GM18951 (cell line): ENCODE measurements at regions of chr3 and their contacts with region 1.

Region 1: DNA sequence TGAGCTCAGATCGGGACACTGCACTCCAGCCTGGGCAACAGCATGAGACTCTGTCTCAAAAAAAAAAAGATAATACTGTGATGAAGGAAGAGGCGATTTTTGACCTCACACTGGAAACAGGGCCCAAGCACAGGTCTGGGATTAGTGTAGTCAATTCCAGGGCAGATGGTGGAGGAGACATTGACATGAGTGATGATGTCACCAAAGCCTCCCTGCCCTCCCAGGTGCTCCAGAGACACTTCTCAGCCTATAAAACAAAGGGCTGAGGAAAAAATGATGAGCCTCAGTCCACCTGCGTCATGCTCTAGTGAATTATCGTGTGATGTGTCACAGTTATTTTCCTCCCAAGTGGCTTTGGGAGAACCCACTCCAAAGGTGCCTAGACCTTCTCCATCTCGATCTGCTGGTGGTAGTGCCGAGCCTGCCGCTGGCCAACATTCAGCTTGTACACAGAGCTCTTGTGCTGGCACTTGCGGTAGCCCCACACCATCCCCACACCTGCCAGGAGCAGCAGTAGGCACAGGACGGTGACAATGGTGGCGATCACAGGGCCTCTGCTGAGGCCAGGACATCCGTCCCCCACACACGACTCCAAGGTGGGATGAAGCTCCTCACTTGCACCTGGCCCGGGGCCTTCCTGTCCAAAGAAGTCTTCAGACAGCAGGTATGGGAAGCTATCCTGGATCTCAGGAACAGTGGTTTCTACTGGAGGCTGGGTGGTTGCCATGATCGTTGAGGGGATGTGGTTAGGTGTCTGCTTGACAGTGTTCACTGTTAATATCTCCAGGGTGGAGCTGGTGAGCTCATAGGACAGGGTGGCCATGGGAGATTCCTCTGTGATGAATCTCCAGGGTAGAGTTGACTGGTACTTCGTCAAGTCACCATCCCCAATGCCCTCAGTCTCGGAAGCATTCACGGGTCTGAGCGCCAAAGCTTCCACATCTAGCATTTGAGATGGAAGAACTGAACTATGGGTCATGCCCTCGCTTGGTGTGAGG is 38.8 kb downstream of the CRTAP start:
- POLR2A ChIP-seq: no peak

Region 2: DNA sequence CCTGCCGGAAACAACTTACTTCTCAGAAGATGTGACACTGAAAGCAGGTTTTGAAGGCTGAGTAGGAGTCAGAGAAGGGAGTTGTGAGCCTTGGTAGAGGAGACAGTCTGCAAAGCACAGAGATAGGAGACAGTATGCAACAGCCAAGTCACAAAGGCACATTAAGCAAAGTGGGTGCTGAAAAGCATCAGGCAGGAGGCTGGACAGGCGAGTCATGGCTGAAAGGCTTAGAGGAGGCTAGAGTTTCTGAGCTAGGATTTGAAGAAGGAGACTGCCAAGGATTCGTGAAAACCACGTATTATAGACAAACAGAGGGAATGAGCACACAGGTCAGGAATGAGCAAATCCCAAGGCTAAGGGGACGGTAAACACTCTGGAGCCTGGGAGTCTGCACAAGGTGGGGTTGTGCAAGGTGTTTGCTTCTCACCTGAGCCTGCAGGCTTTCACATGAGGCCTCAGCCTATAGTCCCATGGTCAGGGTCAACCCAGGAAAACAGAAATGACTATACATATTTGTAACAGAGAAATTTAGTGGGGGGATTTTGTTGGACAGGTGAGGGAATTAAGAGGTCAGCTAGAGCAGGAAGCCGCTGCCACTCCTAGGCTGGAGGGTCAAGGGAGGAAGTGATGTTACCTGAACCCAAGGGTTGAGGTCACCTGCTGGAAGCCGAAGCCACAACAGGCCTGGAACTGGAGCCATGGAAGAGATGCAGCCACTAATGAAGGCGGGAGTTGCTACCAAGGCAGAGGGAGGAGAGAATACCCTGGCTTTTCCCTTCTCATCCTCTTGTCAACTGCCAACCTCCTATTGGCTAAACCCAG is 358.0 kb before region 1 on chr3:
- in situ Hi-C with region 1: no loop called
- POLR2A ChIP-seq: no peak

Region 3: DNA sequence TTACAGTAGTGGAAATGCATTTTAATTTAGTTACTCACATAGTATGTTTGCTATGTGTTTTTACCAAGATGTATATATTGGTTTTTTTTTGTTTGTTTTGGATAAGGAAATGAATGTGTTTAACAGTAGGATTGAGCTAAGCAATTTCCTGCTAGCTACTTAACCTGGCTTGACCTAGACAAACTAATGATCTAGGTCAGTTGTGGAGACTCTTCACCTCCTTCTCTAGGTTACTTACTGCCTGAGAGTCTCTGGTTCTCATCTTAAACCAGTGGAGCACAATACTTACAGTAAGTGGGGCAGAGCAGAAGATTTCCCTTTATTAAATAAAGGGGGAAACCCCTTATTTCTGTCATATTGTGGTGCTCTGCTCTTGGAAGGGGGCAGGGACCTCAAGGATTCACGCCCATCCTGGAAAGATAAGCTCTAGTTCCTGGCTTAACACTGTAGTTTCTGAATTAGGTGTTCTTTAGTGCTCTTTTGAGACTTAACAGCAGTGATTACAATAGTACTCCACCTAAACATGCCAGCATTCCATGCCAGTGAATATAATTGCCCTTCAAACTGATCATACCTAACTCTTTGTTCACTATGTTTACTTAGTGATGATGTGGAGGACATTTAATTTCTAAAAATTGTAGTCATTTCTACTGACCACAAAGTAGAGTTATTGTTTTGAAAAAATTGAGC is 207.6 kb after region 1 on chr3:
- in situ Hi-C with region 1: loop called (anchors 10 kb)
- POLR2A ChIP-seq: no peak

Region 4: GRCh38 chr3:33889394-33890039 is 736.9 kb after region 1 on chr3:
- in situ Hi-C with region 1: no loop called
- POLR2A ChIP-seq: no peak